HepG2 (cell line): ENCODE measurements at regions of chr18 and their contacts with region 1.

Region 1: DNA sequence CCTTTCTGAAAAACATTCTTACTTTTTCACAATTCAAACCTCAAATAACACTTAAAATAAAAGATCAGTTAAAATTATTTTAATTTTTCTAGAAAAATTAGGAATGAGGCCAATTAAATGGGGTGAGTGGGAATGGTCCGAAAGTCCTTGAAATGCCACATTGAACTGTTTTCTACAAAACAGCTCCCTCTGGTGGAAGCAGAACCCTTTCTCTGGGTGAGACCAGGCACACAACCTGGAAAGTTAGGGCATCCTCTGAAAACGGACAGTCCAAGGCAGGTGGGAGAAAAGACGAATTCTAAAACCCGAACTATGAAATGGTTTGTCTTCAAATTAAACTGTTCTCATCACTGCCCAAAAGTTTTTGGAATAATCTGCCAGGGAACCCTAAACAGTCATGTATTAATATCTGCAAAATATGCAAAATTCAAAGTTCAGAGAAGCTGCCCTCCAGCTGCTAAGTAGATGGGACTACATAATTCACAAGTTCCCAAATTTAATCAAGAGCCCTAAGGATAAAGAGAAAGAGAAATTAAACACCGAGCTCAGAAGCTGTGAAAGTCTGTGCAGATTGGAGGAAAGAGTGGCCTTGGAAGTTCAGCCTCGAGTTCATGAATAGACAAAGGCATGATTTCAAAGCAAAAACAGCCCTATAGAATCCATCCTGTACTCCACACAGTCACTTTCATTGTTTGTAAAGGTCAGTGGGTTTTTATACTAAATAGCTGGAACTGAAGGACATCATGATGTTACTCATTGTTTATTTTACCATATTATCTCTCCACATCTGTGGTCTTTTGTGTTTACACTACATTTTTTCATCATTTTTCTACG is 108.3 kb downstream of the PIEZO2 start:
- DNase-seq: peak; percentile 94
- ATAC-seq: peak; percentile 92
- H3K4me3 ChIP-seq: peak overlapping the region; percentile 43 to 60 (median 59); a peak in 5 of 6 replicates
- H3K27ac ChIP-seq: peak overlapping the region; percentile 84
- H3K4me1 ChIP-seq: peaks cover 61% of the 10 kb centered on the region
- H3K27me3 ChIP-seq: no peaks in the 10 kb centered on the region
- CTCF ChIP-seq: peak; percentile 82
- EP300 ChIP-seq: peak in 1 of 2 experiments; percentile 68; a peak in 1 of 4 replicates
- POLR2A ChIP-seq: no peak
- RAD21 ChIP-seq: peak; percentile 78

Region 2: GRCh38 chr18:10851824-10852319 is 189.2 kb before region 1 on chr18:
- CTCF ChIA-PET with region 1: interaction called, 25 read pairs
- POLR2A ChIA-PET with region 1: interaction called, 6 read pairs
- in situ Hi-C with region 1: loop called (anchors 5 kb)
- intact Hi-C with region 1: loop called (anchors 1 kb)
- DNase-seq: peak; percentile 57
- ATAC-seq: no peak
- H3K4me3 ChIP-seq: no peak overlapping the region
- H3K27ac ChIP-seq: no peak overlapping the region
- H3K4me1 ChIP-seq: peaks cover 28% of the 10 kb centered on the region
- H3K27me3 ChIP-seq: no peaks in the 10 kb centered on the region; a peak in 1 of 5 replicates
- CTCF ChIP-seq: peak; percentile 72
- EP300 ChIP-seq: no peak
- POLR2A ChIP-seq: no peak
- RAD21 ChIP-seq: peak; percentile 83

Region 3: GRCh38 chr18:11005528-11005927 is 35.5 kb before region 1 on chr18:
- CTCF ChIA-PET with region 1: interaction called, 3 read pairs
- POLR2A ChIA-PET with region 1: interaction called, 18 read pairs
- in situ Hi-C with region 1: no loop called
- intact Hi-C with region 1: no loop called
- DNase-seq: peak; percentile 99
- ATAC-seq: peak; percentile 99
- H3K4me3 ChIP-seq: peak overlapping the region; percentile 28 to 59 (median 52); a peak in 5 of 6 replicates
- H3K27ac ChIP-seq: peak overlapping the region; percentile 93
- H3K4me1 ChIP-seq: peaks cover 74% of the 10 kb centered on the region
- H3K27me3 ChIP-seq: no peaks in the 10 kb centered on the region
- CTCF ChIP-seq: no peak
- EP300 ChIP-seq: peak; percentile 97 to 98
- POLR2A ChIP-seq: peak; percentile 61 to 79; a peak in 3 of 4 replicates
- RAD21 ChIP-seq: 0 out of 2 replicates have a peak, but pooled peaks have one; percentile 41

Region 4: DNA sequence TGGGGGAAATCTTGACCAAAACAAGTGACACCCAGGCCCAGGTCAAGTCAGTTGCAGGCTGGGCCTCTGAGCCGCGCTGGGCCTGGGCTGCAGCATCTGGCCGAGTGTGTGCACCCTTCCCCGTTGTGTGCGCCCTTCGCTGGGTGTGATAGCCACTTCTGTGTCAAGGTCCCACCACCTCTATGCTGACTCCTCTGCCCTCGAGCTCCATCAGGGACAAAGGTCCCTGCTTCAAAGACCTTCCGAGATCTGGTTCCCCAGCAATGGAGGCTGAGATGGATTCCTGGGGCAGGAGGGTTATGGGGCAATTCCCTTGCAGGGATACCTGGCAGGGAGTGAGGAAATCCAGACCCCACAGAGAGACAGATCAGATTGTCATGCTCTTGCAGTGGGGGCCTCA is 14.7 kb after region 1 on chr18:
- CTCF ChIA-PET with region 1: no interaction called
- POLR2A ChIA-PET with region 1: interaction called, 10 read pairs
- in situ Hi-C with region 1: no loop called
- intact Hi-C with region 1: no loop called
- DNase-seq: peak; percentile 69
- ATAC-seq: peak; percentile 98
- H3K4me3 ChIP-seq: 0 out of 6 replicates have a peak overlapping the region, but pooled peaks of 1 of the 3 experiments have one; percentile 20
- H3K27ac ChIP-seq: peak overlapping the region; percentile 27
- H3K4me1 ChIP-seq: peaks cover 51% of the 10 kb centered on the region
- H3K27me3 ChIP-seq: no peaks in the 10 kb centered on the region; a peak in 1 of 5 replicates
- CTCF ChIP-seq: no peak
- EP300 ChIP-seq: peak in 1 of 2 experiments; percentile 28; a peak in 1 of 4 replicates
- POLR2A ChIP-seq: no peak
- RAD21 ChIP-seq: no peak

Region 5: DNA sequence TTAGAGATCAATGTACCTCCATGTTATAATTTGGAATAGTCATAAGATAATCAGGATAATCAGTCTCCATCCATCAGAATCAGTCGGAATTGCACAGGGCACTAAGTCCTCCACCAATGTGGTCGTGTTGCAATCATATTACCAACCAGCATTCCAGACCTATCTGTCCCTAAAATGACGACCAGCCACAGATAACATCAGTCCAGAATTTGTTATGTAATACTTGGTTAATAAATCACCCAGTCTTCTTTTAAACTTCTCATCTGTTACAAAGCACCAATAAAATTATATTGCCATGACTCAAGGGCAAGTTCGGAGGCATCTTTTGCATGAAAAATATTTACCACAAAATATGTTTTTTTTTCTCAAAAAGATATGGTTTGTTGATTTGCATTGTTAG is 78.9 kb after region 1 on chr18:
- CTCF ChIA-PET with region 1: no interaction called
- POLR2A ChIA-PET with region 1: no interaction called
- in situ Hi-C with region 1: loop called (anchors 10 kb)
- intact Hi-C with region 1: loop called (anchors 5 kb)
- DNase-seq: peak; percentile 94
- ATAC-seq: peak; percentile 86
- H3K4me3 ChIP-seq: peak overlapping the region in 2 of 3 experiments; percentile 18 to 43; a peak in 2 of 6 replicates
- H3K27ac ChIP-seq: peak overlapping the region; percentile 71
- H3K4me1 ChIP-seq: peaks cover 86% of the 10 kb centered on the region
- H3K27me3 ChIP-seq: no peaks in the 10 kb centered on the region
- CTCF ChIP-seq: no peak
- EP300 ChIP-seq: peak; percentile 68 to 87; a peak in 3 of 4 replicates
- POLR2A ChIP-seq: no peak
- RAD21 ChIP-seq: no peak

Region 6: GRCh38 chr18:11149441-11150270 is 108.6 kb after region 1 on chr18 and contains the start of gene PIEZO2:
- CTCF ChIA-PET with region 1: interaction called, 7 read pairs
- POLR2A ChIA-PET with region 1: interaction called, 7 read pairs
- in situ Hi-C with region 1: loop called (anchors 5 kb)
- intact Hi-C with region 1: loop called (anchors 2 kb)
- DNase-seq: peak; percentile 68
- ATAC-seq: peak; percentile 89
- H3K4me3 ChIP-seq: peak within 1 kb of the TSS; percentile 57 to 71 (median 64)
- H3K27ac ChIP-seq: no peak within 1 kb of the TSS
- H3K4me1 ChIP-seq: peaks cover 41% of the 10 kb centered on the region
- H3K27me3 ChIP-seq: 0 out of 5 replicates have a peak, but pooled peaks cover 0 to 3% of the 10 kb centered on the region in 2 experiments
- CTCF ChIP-seq: 0 out of 2 replicates have a peak, but pooled peaks have one; percentile 5
- EP300 ChIP-seq: no peak
- POLR2A ChIP-seq: peak in 1 of 2 experiments; percentile 55; a peak in 3 of 4 replicates
- RAD21 ChIP-seq: no peak
- total RNA-seq, gene PIEZO2: 25.5 and 27.2 TPM in 2 replicates